ENCODE measurements at regions of chr2 and their contacts with region 1.

Region 1: DNA sequence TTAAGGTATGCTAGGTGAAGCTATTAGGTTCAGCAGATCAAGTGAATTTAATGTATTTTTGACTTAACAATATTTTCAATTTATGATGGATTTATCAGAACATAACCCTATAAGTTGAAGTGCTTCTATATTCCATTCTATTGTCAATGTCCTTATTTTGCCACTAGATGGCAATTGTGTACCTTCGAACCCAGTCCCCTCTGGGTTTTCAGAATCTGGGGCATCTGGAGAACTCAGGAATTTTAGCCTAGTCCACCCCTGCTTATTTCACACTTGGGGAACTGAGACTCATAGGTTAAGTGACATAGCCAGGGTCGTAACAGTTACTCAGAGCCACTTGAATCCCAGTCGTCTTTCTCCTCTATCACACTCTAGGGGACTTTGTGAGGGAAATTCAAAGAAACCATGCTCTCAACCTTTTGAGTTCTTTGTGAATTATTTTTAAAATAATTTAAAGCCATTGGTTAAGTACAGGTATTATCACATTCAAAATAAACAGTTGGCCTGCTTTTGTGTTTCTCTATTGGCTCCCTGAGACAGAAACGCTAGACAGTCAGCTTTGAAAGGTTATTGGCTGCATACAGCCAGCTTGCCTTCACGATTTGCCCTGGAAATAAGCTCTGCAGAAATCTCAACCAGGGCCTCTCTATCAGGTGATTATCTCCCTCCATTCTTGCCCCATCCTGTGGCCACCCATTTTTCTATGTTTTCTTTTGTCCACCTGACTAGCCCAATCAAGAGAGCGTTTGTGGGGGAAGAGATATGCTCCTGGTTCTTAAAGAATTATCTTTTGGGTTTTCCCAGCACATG is 145.0 kb downstream of the TTC27 start:
- DNase-seq: peak; percentile 67
- H3K4me3 ChIP-seq: no peak overlapping the region
- H3K27ac ChIP-seq: no peak overlapping the region
- H3K4me1 ChIP-seq: no peaks in the 10 kb centered on the region
- H3K27me3 ChIP-seq: no peaks in the 10 kb centered on the region
- CTCF ChIP-seq: peak; percentile 80

Region 2: GRCh38 chr2:32946314-32947075 is 173.7 kb after region 1 on chr2 and contains the start of gene LTBP1:
- CTCF ChIA-PET with region 1: no interaction called
- POLR2A ChIA-PET with region 1: no interaction called
- intact Hi-C with region 1: loop called (anchors 2 kb)
- DNase-seq: peak; percentile 78
- H3K4me3 ChIP-seq: peak within 1 kb of the TSS; percentile 54
- H3K27ac ChIP-seq: no peak within 1 kb of the TSS
- H3K4me1 ChIP-seq: peaks cover 4% of the 10 kb centered on the region
- H3K27me3 ChIP-seq: peaks cover 43% of the 10 kb centered on the region
- CTCF ChIP-seq: peak; percentile 92
- total RNA-seq, gene LTBP1: 2.2 and 2.3 TPM in 2 replicates

Region 3: GRCh38 chr2:33086400-33087015 is 313.7 kb after region 1 on chr2:
- CTCF ChIA-PET with region 1: no interaction called
- POLR2A ChIA-PET with region 1: no interaction called
- intact Hi-C with region 1: loop called (anchors 2 kb)
- DNase-seq: peak; percentile 31
- H3K4me3 ChIP-seq: no peak overlapping the region
- H3K27ac ChIP-seq: no peak overlapping the region
- H3K4me1 ChIP-seq: no peaks in the 10 kb centered on the region
- H3K27me3 ChIP-seq: no peaks in the 10 kb centered on the region
- CTCF ChIP-seq: peak; percentile 18; the same call in 1 of the 2 replicates

Region 4: DNA sequence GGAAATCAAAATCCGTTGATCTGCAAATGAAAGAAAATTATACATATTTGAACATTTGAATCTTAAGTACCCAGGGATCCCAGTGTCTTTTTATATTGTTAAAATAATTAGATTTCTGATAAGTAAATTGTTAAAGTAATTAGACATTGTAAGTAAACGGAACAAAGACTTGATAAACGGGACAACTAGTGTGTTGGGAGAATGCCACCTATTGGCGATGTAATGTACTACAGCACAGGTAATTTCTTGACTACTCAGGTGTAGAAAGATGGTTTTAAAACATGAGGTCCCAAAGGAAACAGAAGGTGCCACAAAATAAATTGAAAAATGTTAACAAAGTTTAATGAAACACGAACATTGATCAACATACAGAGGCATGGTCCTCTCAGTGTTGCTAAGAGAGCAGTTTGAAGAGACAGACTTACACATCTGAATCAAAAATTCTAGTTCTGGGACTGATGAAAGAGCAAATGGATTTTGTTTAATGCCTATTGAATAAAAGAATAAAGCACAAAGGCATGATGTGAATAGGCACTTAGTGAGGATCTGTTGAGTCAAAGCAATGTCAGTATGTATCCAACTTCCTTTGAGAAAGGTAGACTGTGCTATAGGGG is 600.2 kb after region 1 on chr2:
- CTCF ChIA-PET with region 1: no interaction called
- POLR2A ChIA-PET with region 1: no interaction called
- intact Hi-C with region 1: loop called (anchors 2 kb)
- DNase-seq: peak; percentile 32
- H3K4me3 ChIP-seq: no peak overlapping the region
- H3K27ac ChIP-seq: no peak overlapping the region
- H3K4me1 ChIP-seq: no peaks in the 10 kb centered on the region
- H3K27me3 ChIP-seq: no peaks in the 10 kb centered on the region
- CTCF ChIP-seq: peak; percentile 85

Region 5: DNA sequence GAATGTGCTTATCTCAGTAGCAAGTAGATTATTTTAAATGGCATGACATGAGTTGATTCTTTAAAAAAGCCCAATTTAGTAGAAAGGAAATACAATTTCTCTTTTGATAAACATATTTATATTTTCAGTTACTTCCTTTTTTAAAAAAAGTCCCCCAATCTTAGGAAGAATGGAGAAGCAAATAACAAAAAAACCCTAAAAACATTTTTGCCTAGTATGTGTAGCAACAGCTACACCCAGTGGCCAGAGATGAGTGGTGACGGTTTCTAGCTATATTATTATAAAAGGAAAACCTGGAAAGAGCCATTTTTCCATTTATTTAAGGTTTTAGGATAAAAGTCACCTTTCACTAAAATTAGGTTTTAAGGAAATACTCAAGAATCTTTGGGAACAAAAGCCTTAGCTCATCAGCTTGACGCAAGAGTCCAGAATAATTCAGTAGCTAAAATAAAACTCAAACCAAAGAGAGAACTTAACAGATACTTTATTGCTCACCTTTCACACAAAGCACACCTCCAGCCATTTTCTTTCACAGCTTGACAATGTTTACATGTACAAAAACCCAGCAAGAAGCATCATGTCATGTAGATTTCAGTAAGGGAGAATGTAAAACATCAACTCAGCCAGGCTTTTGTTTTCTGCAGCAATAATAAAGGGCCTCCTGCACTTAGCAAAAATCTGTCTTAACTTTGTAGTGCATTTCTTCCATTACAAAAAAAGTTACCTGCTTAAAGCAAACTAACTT is 810.5 kb after region 1 on chr2:
- CTCF ChIA-PET with region 1: no interaction called
- POLR2A ChIA-PET with region 1: no interaction called
- intact Hi-C with region 1: loop called (anchors 5 kb)
- DNase-seq: peak; percentile 54
- H3K4me3 ChIP-seq: no peak overlapping the region
- H3K27ac ChIP-seq: no peak overlapping the region
- H3K4me1 ChIP-seq: no peaks in the 10 kb centered on the region
- H3K27me3 ChIP-seq: no peaks in the 10 kb centered on the region
- CTCF ChIP-seq: peak; percentile 82